WTC11 (cell line): ENCODE measurements at regions of chr1 and their contacts with region 1.

Region 1: DNA sequence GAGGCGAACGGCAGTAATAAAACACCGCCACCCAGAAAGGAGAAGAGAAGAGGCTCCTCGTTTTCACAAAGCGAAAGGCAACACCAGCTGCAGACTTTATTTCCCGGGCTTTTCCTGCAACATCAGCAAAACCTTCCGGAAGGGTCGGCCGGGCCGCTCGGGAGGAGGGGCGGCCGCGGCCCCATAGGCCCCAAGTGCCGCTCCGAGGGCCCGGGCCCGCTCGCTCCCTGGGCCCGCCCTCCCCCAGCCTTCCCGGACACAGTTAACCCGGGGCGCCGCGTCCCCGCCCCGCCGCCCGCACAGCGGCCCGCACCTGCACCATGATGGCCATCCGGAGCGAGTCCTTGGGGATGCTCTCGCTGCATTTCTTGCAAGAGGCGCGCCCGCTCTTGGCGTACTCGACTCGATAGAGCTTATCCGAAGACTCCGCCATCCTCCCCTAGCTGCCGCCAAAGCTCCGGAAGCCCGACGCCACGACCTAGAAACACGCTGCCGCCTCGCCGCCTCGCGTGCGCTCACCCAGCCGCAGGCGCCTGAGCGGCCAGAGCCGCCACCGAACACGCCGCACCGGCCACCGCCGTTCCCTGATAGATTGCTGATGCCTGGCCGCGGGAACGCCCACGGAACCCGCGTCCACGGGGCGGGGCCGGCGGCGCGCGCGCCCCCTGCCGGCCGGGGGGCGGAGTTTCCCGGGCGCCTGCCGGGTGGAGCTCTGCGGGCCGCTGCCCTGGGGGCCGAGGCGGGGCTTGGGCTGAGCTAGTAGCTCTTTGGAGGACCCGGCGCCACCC is at the start of gene PARP1:
- DNase-seq: peak; percentile 82
- ATAC-seq: peak; percentile 71
- H3K4me3 Mint-ChIP-seq: peak within 1 kb of the TSS; percentile 99
- H3K27ac Mint-ChIP-seq: peak within 1 kb of the TSS; percentile 99
- H3K4me1 Mint-ChIP-seq: peaks cover 43% of the 10 kb centered on the region
- H3K27me3 Mint-ChIP-seq: no peaks in the 10 kb centered on the region
- CTCF ChIP-seq: peak; percentile 86
- total RNA-seq, gene PARP1: 366 to 376 TPM (median 371 TPM) in 3 replicates

Region 2: DNA sequence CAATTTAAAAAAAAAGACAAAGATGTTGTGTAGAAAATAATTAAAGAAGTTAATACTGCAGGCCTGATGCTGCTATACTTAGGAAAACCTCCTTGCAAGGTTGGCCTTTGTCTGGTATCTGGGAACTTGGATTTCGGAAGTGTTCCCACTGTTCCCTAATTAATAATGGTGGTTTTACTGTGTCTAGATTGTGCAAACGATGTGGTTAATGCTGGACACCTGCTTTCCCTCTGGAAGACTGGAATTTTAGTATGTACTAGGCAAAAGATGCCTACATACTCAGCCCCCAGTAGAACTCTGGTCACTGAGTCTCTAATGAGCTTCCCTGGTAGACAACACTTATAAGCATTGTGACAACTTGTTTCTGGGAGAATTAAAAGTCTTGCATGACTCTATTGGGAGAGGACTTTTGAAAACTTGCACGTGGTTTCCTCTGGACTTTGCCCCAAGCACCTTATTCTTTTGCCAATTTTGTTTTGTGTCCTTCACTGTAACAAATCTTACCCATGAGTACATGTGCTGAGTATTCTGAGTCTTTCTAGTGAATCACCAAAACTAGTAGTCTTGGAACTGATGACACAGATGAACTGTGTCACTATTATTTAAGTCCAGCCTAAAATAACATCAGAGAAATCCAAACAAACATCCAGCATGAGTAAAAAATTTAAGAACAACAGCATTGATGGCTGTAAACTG is 139.1 kb before region 1 on chr1:
- CTCF ChIA-PET with region 1: no interaction called
- POLR2A ChIA-PET with region 1: no interaction called
- DNase-seq: no peak
- ATAC-seq: no peak
- H3K4me3 Mint-ChIP-seq: no peak overlapping the region
- H3K27ac Mint-ChIP-seq: peak overlapping the region; percentile 16; the same call in 1 of the 2 replicates
- H3K4me1 Mint-ChIP-seq: no peaks in the 10 kb centered on the region
- H3K27me3 Mint-ChIP-seq: no peaks in the 10 kb centered on the region
- CTCF ChIP-seq: no peak

Region 3: GRCh38 chr1:226424228-226425003 is 16.7 kb after region 1 on chr1:
- CTCF ChIA-PET with region 1: interaction called, 32 read pairs
- POLR2A ChIA-PET with region 1: no interaction called
- DNase-seq: no peak
- ATAC-seq: peak; percentile 75
- H3K4me3 Mint-ChIP-seq: no peak overlapping the region
- H3K27ac Mint-ChIP-seq: no peak overlapping the region
- H3K4me1 Mint-ChIP-seq: peaks cover 10% of the 10 kb centered on the region
- H3K27me3 Mint-ChIP-seq: no peaks in the 10 kb centered on the region; the same call in 1 of the 2 replicates
- CTCF ChIP-seq: no peak

Region 4: GRCh38 chr1:226444901-226445300 is 37.2 kb after region 1 on chr1:
- CTCF ChIA-PET with region 1: interaction called, 14 read pairs
- POLR2A ChIA-PET with region 1: no interaction called
- DNase-seq: no peak
- ATAC-seq: peak; percentile 80
- H3K4me3 Mint-ChIP-seq: no peak overlapping the region
- H3K27ac Mint-ChIP-seq: no peak overlapping the region
- H3K4me1 Mint-ChIP-seq: peaks cover 61% of the 10 kb centered on the region
- H3K27me3 Mint-ChIP-seq: no peaks in the 10 kb centered on the region
- CTCF ChIP-seq: no peak

Region 5: DNA sequence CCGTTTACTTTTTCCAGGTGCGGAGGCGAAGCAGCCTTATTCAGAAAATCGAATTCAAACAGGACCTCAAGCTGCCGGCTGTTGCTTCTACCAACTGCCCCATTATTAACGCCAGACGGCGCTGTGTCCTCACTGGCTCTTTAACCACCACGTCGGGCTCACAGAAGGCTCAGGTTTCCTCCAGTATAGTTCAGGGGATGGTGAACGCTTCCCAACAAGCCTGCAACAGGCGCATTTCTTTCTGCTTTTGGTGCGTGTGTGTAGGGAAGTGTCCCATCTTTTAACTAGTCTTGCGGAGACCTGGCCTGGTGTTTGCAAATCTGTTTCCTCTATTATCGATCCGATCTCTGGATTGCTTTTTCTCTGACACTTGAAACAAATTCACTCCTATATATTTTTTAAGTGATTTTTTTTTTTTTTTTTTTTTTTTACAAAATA is 140.1 kb after region 1 on chr1:
- CTCF ChIA-PET with region 1: interaction called, 40 read pairs
- POLR2A ChIA-PET with region 1: interaction called, 6 read pairs
- DNase-seq: peak; percentile 86
- ATAC-seq: peak; percentile 79
- H3K4me3 Mint-ChIP-seq: peak overlapping the region; percentile 50
- H3K27ac Mint-ChIP-seq: no peak overlapping the region
- H3K4me1 Mint-ChIP-seq: peaks cover 23% of the 10 kb centered on the region
- H3K27me3 Mint-ChIP-seq: peaks cover 70% of the 10 kb centered on the region
- CTCF ChIP-seq: peak; percentile 58

Region 6: GRCh38 chr1:226608699-226609505 is 201.2 kb after region 1 on chr1:
- CTCF ChIA-PET with region 1: interaction called, 15 read pairs
- POLR2A ChIA-PET with region 1: no interaction called
- DNase-seq: peak; percentile 86
- ATAC-seq: peak; percentile 66
- H3K4me3 Mint-ChIP-seq: no peak overlapping the region; the same call in 1 of the 2 replicates
- H3K27ac Mint-ChIP-seq: no peak overlapping the region
- H3K4me1 Mint-ChIP-seq: peaks cover 43% of the 10 kb centered on the region
- H3K27me3 Mint-ChIP-seq: no peaks in the 10 kb centered on the region; the same call in none of the 2 replicates
- CTCF ChIP-seq: peak; percentile 93

Region 7: GRCh38 chr1:226646026-226646691 is 238.5 kb after region 1 on chr1:
- CTCF ChIA-PET with region 1: no interaction called
- POLR2A ChIA-PET with region 1: no interaction called
- DNase-seq: no peak
- ATAC-seq: no peak
- H3K4me3 Mint-ChIP-seq: no peak overlapping the region
- H3K27ac Mint-ChIP-seq: no peak overlapping the region
- H3K4me1 Mint-ChIP-seq: peaks cover 21% of the 10 kb centered on the region
- H3K27me3 Mint-ChIP-seq: no peaks in the 10 kb centered on the region
- CTCF ChIP-seq: no peak